Aorta (tissue), 5 donors: ENCODE measurements at regions of chr6 and their contacts with region 1.

Region 1: DNA sequence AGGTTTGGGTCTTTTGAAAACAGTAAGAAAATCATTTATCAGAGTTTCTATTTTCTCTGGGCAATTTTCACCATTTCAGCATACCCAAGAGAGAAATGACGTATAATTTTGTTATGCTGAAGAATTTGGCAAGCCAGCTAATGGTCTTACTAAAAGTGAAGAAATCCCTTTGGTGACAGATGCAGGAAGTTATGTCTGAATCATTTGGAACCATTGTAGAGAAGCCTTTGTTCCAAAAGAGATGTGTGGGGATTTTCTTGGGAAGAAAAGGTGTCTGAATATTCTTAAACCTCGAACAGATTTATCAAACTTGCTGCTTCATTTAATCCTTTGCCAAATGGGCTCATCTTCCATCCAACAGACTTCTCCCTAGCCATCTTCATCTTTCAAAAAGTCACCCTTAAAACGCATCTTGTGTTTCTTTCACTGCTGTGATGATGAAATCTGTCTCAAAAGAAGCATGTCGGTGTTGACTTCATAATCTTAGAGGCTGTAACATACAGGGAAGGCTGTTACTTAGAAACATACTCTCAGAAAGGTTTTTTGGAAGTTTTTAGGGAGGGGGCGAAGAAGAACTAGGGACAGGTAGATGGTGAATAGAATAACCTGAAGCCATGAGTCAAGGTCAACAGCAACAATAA is 39.5 kb downstream of the CITED2 start:
- DNase-seq: no peak
- ATAC-seq: peak; percentile 86
- H3K4me3 ChIP-seq: no peak overlapping the region
- H3K27ac ChIP-seq: peak overlapping the region in 1 of 2 donors; percentile 76
- H3K4me1 ChIP-seq: peaks cover 2 to 7% of the 10 kb centered on the region in 2 donors
- H3K27me3 ChIP-seq: no peaks in the 10 kb centered on the region

Region 2: DNA sequence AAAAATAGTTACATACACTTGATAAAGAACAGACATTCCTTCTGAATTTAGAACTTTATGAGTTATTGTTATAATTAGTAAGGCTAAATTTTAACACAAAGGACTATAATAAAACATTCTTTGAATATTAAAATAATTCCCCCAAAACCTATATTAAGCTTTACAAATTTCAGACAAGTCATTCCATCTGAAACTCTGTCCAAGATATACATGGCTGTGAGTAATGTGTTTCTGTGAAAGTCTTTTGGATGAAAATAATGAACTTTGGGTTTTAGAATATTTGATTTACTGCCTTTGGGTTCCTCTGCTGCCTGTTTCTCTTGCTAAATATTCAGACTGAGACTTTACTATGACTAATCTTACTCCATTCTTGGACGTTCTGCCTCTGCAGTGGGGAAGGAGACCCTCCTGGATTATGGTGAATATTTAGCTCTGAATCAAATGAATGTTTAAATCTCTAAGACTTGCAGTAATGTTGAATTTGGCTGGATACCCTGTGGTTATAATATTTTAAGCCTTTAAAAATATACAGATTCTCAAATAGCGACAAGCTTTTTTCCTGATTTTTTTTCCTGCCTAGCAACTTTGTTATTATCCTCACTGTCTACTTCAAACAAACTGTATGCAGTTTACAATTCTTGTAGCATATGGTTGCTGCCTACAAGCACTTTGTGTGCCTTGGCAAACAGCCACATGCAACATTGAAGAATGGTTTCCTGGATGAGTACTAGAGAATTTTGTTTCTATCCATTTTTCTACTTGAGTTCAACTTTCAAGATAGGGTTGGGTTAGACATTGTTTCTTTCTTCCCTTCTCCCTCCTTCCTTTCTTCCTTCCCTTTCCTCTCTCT is 94.5 kb before region 1 on chr6:
- intact Hi-C with region 1: loop called in 1 of 2 experiments (anchors 5 kb)
- DNase-seq: no peak
- ATAC-seq: peak; percentile 68
- H3K4me3 ChIP-seq: no peak overlapping the region
- H3K27ac ChIP-seq: peak overlapping the region; percentile 76 to 80
- H3K4me1 ChIP-seq: peaks cover 0 to 10% of the 10 kb centered on the region in 2 donors
- H3K27me3 ChIP-seq: no peaks in the 10 kb centered on the region

Region 3: GRCh38 chr6:139288496-139289040 is 46.4 kb before region 1 on chr6:
- intact Hi-C with region 1: loop called in 1 of 2 experiments (anchors 2 kb)
- DNase-seq: no peak
- ATAC-seq: no peak
- H3K4me3 ChIP-seq: no peak overlapping the region
- H3K27ac ChIP-seq: no peak overlapping the region
- H3K4me1 ChIP-seq: no peaks in the 10 kb centered on the region
- H3K27me3 ChIP-seq: no peaks in the 10 kb centered on the region